ENCODE measurements at regions of chr10 and their contacts with region 1.

Region 1: DNA sequence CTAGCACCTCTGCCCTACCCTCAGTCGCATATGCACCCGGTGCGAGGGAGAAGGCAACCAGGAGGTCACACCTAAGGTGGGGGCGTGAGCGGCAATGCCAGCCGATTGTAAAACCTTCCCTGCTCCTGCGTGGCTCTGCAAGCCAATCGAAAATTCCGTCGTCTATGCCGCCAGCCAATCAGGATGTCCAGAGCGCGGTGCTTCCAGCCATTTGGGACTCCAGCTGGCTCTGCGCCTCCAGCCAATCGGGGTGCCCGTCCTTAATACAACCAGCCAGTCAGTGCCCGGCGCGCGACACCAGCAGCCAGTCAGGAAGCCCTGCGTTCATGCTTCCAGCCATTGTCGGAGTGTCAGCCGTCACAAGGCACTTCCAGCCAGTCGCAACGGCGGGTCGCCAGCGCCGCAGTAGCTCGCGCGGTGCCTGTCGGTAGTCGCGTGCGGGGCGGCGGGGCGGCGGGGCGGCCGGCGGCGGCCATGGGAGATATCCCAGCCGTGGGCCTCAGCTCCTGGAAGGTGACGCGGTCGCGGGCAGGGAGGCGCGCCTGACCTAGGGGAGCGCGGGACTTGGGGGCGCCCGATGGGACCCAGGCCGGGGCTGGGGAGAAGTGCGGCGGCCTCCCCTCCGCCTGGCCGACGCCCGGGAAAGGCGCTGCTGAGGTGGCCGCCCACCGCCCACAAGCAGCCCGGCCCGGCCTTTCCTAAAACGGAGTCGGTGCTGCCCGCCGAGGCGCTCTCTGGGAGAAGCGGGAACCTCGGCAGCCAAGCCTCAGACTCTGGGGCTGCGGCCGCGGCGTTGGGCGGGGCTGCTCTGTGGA is at the start of gene AKR1E2:
- DNase-seq: peak; percentile 82
- ATAC-seq: peak; percentile 93
- H3K4me3 Mint-ChIP-seq: peak within 1 kb of the TSS; percentile 65
- H3K27ac Mint-ChIP-seq: no peak within 1 kb of the TSS
- H3K4me1 Mint-ChIP-seq: peaks cover 9% of the 10 kb centered on the region
- H3K27me3 Mint-ChIP-seq: peaks cover 52% of the 10 kb centered on the region
- CTCF ChIP-seq: no peak
- total RNA-seq, gene AKR1E2: 1.7 to 5.6 TPM (median 5.4 TPM) in 3 replicates

Region 2: DNA sequence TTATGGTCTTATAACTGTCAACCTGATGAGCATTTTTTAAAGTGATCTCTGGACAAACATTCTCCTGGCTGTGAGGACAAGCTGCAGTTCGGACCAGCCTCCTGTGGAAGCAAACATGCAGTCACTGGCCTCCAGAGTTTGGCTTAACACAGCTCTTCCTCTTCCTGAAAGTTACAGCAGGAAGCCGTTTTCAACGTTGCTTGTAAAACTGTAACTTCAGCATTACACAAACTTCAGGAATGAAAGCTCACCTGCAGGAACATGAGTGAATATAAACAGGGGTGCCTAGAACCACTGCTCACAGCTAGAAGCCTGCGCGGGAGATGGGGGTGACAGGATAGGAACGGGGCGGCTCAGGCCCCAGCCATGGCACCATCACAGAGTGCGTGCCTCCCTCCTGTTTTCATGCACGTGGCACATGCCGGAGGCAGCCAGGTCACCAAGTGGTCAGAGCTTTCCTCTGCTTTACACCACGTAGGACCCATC is 1360.6 kb before region 1 on chr10:
- CTCF ChIA-PET with region 1: no interaction called
- POLR2A ChIA-PET with region 1: no interaction called
- DNase-seq: no peak
- ATAC-seq: no peak
- H3K4me3 Mint-ChIP-seq: no peak overlapping the region
- H3K27ac Mint-ChIP-seq: no peak overlapping the region
- H3K4me1 Mint-ChIP-seq: peaks cover 38% of the 10 kb centered on the region
- H3K27me3 Mint-ChIP-seq: no peaks in the 10 kb centered on the region
- CTCF ChIP-seq: no peak

Region 3: DNA sequence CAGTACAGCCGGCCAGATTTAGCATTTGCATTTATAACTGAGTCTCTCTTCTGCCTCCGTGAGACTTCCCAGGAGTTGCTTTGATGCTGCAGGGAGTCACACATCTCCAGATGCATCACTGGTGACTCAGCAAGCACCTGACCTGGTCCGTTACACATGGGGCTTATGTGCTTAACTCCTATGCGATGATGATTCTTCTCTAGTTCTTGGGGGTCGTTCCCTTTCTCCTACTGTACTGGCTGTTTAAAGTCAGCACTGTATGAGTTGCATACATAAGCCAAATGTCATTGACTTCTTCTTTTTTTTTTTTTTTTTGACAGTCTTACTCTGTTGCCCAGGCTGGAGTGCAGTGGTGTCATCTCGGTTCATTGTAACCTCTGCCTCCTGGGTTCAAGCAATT is 13.0 kb before region 1 on chr10:
- CTCF ChIA-PET with region 1: interaction called, 26 read pairs
- POLR2A ChIA-PET with region 1: no interaction called
- DNase-seq: no peak
- ATAC-seq: no peak
- H3K4me3 Mint-ChIP-seq: no peak overlapping the region
- H3K27ac Mint-ChIP-seq: no peak overlapping the region
- H3K4me1 Mint-ChIP-seq: peaks cover 13% of the 10 kb centered on the region
- H3K27me3 Mint-ChIP-seq: no peaks in the 10 kb centered on the region
- CTCF ChIP-seq: no peak

Measured in WTC11 (cell line).